ENCODE measurements at regions of chr1 and their contacts with region 1.

Region 1: GRCh38 chr1:22749919-22750688 is 39.5 kb downstream of the EPHB2 start:
- DNase-seq: peak; percentile 58
- H3K4me3 Mint-ChIP-seq: no peak overlapping the region
- H3K27ac Mint-ChIP-seq: peak overlapping the region; percentile 81
- H3K4me1 Mint-ChIP-seq: peaks cover 29% of the 10 kb centered on the region
- H3K27me3 Mint-ChIP-seq: no peaks in the 10 kb centered on the region
- CTCF ChIP-seq: no peak

Region 2: DNA sequence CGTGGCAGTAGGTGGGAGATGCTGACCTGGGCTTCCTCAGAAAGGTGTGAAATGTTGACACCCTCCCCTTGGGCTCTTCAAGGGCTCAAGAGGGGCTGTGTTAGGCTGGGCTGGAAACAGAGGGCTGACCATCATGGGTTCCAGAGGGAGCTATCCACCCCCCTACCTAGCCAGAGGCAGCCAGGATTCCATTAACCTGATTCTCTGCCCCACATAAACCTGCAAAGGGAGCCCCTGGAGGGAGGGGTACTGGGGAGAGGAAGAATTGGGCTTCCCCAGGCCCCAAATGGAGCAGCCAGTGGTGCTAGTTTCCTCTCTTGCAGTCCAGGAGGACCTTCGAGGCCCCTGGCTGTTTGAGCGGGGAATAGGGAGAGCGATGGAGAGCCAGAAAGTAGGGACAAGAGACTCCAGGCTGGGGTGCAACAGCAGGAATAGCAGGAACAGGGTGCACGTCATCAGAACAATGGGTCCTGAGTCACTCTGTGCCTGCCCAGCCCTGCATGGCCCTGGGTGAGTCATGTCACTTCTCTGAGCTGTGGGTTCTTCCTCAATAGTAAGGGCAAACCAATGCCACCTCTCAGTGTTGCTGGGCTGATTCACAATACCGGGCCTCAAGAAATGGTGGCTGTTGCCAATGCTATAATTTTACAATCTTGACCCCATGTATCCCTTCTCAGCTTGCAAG is 81.8 kb after region 1 on chr1:
- CTCF ChIA-PET with region 1: interaction called, 3 read pairs
- intact Hi-C with region 1: loop called (anchors 5 kb)
- DNase-seq: peak; percentile 83
- H3K4me3 Mint-ChIP-seq: no peak overlapping the region
- H3K27ac Mint-ChIP-seq: peak overlapping the region; percentile 93
- H3K4me1 Mint-ChIP-seq: peaks cover 67% of the 10 kb centered on the region
- H3K27me3 Mint-ChIP-seq: no peaks in the 10 kb centered on the region
- CTCF ChIP-seq: no peak

Region 3: DNA sequence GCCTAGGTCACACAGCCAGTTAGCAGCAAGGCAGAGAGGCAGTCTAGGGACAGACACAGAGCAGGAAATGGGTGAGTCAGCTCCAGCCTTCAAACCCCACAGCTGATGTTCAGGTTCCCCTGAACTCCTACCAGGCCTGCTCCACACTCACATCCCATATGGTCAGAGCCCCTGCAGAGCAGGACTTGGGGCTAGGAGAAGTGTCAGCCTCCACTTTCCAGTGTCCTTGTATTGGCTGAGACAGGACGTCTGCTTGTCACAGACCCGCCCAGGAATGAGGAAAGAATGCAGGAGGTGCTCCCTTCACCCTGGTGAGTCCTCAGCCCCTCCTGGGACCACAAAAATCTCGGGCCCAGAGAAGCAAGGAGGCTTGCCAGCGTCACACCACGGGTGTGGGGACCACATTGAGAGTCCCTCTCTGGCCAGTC is 130.1 kb after region 1 on chr1:
- CTCF ChIA-PET with region 1: no interaction called
- intact Hi-C with region 1: no loop called
- DNase-seq: no peak
- H3K4me3 Mint-ChIP-seq: no peak overlapping the region
- H3K27ac Mint-ChIP-seq: no peak overlapping the region
- H3K4me1 Mint-ChIP-seq: no peaks in the 10 kb centered on the region
- H3K27me3 Mint-ChIP-seq: no peaks in the 10 kb centered on the region
- CTCF ChIP-seq: no peak

Region 4: DNA sequence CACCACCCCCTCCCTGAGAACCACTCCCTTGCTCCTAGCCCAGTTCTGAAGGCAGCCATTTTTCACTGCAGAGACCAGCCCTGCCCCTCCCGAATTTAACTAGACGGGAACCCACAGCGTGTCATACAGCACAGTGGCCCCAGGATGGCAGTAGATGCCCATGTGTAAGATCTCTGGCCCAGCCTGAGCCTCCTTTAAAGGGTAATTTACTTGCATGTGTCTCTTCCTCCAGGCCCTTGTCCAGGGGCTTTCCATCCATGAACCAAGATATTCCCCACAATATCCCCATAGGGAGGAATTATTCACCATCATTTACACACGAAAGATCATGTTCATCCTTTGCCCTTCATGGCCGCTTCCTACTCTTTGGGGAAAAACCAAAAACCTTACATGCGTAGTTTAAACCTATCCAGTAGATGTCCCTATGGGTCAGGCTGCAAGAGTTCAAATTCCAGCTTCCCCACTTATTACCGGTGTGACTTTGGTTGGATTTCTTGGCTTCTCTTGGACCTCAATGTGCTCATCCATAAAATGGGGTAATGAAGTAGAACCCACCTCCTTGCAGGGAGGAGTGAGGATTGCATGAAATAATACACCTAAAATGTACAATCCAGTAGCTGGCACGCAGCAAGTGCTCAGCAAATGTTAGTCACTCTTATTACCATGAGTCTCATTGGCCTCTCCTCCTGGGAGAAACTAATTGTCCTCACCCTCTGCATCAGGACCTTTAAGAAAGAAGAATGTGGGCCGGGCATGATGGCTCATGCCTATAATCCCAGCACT is 226.5 kb after region 1 on chr1:
- CTCF ChIA-PET with region 1: no interaction called
- intact Hi-C with region 1: no loop called
- DNase-seq: peak; percentile 68
- H3K4me3 Mint-ChIP-seq: no peak overlapping the region
- H3K27ac Mint-ChIP-seq: peak overlapping the region; percentile 47
- H3K4me1 Mint-ChIP-seq: peaks cover 26% of the 10 kb centered on the region
- H3K27me3 Mint-ChIP-seq: peaks cover 12% of the 10 kb centered on the region
- CTCF ChIP-seq: peak; percentile 66

Measured in Calu3 (cell line).